Calu3 (cell line): ENCODE measurements at regions of chr4 and their contacts with region 1.

Region 1: GRCh38 chr4:153075836-153076518 is 128.3 kb upstream of the TRIM2 start:
- DNase-seq: no peak
- H3K4me3 Mint-ChIP-seq: no peak overlapping the region
- H3K27ac Mint-ChIP-seq: no peak overlapping the region
- H3K4me1 Mint-ChIP-seq: peaks cover 23% of the 10 kb centered on the region
- H3K27me3 Mint-ChIP-seq: no peaks in the 10 kb centered on the region
- CTCF ChIP-seq: no peak

Region 2: GRCh38 chr4:153058671-153059060 is 17.3 kb before region 1 on chr4:
- CTCF ChIA-PET with region 1: interaction called, 3 read pairs
- intact Hi-C with region 1: loop called (anchors 1 kb)
- DNase-seq: no peak
- H3K4me3 Mint-ChIP-seq: no peak overlapping the region
- H3K27ac Mint-ChIP-seq: no peak overlapping the region
- H3K4me1 Mint-ChIP-seq: no peaks in the 10 kb centered on the region
- H3K27me3 Mint-ChIP-seq: peaks cover 50% of the 10 kb centered on the region
- CTCF ChIP-seq: no peak

Region 3: GRCh38 chr4:153276971-153277370 is 201.0 kb after region 1 on chr4:
- CTCF ChIA-PET with region 1: no interaction called
- intact Hi-C with region 1: no loop called
- DNase-seq: no peak
- H3K4me3 Mint-ChIP-seq: no peak overlapping the region
- H3K27ac Mint-ChIP-seq: no peak overlapping the region
- H3K4me1 Mint-ChIP-seq: peaks cover 22% of the 10 kb centered on the region
- H3K27me3 Mint-ChIP-seq: no peaks in the 10 kb centered on the region
- CTCF ChIP-seq: no peak